Gastrocnemius medialis (tissue), 4 donors: ENCODE measurements at regions of chr10 and their contacts with region 1.

Region 1: GRCh38 chr10:59808896-59809643 is 55.8 kb upstream of the MRLN start:
- DNase-seq: peak; percentile 82 to 87
- ATAC-seq: peak; percentile 83 to 88
- H3K4me3 ChIP-seq: no peak overlapping the region
- H3K27ac ChIP-seq: peak overlapping the region; percentile 61 to 86 (median 66)
- H3K4me1 ChIP-seq: peaks cover 24 to 33% of the 10 kb centered on the region in 2 donors
- H3K27me3 ChIP-seq: no peaks in the 10 kb centered on the region
- CTCF ChIP-seq: peak; percentile 71 to 85 (median 81)
- POLR2A ChIP-seq: no peak

Region 2: GRCh38 chr10:59753267-59753666 is 55.8 kb before region 1 on chr10 and contains the start of gene MRLN:
- in situ Hi-C with region 1: no loop called
- intact Hi-C with region 1: loop called (anchors 2 kb)
- DNase-seq: peak; percentile 45 to 56
- ATAC-seq: peak; percentile 91 to 95
- H3K4me3 ChIP-seq: peak within 1 kb of the TSS; percentile 40 to 64 (median 63)
- H3K27ac ChIP-seq: peak within 1 kb of the TSS; percentile 84 to 93 (median 89)
- H3K4me1 ChIP-seq: peaks cover 29 to 32% of the 10 kb centered on the region in 2 donors
- H3K27me3 ChIP-seq: no peaks in the 10 kb centered on the region
- CTCF ChIP-seq: no peak
- POLR2A ChIP-seq: peak; percentile 68 to 86
- total RNA-seq, gene MRLN: 67.7 to 352 (median 188) TPM